Mammary epithelial cell (primary cell): ENCODE measurements at regions of chr3 and their contacts with region 1.

Region 1: DNA sequence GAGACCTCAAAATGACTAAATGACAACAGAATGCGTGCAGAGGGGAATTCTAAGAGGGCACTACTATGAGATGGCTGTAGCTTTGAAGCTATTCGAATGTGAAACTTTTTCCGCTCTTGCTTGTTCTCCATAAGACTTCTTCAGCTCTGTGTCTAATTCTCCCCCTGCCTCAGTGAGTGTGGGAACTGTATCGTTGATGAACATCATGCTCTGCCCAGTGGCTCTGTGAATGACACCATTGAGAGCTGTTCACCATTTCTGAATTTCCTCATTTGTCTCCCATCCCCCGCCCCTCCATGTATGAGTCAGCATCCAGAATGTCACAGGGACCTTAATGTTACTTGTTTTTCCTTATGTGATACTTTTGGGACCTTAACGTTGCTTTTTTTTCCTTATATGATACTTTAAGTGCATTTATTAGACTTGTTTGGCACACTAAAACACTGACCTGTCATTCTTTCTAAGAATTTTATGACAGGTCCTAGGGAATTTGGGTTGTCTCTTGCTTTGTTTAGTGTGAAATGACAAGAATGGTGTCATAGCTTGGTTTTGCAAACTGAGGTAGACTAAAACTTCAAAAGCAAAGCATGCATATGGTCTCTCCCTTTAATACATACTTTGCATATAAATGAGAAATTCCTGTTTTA is 99.5 kb downstream of the FNDC3B start:
- DNase-seq: peak; percentile 58
- H3K4me3 ChIP-seq: no peak overlapping the region
- H3K27ac ChIP-seq: peak overlapping the region; percentile 97
- H3K4me1 ChIP-seq: peaks cover 81% of the 10 kb centered on the region
- H3K27me3 ChIP-seq: no peaks in the 10 kb centered on the region
- CTCF ChIP-seq: no peak

Region 2: GRCh38 chr3:172155897-172156657 is 17.2 kb after region 1 on chr3:
- CTCF ChIA-PET with region 1: no interaction called
- dilution Hi-C with region 1: no loop called
- in situ Hi-C with region 1: no loop called
- intact Hi-C with region 1: loop called (anchors 2 kb)
- DNase-seq: peak; percentile 95
- H3K4me3 ChIP-seq: no peak overlapping the region
- H3K27ac ChIP-seq: peak overlapping the region; percentile 87
- H3K4me1 ChIP-seq: peaks cover 72% of the 10 kb centered on the region
- H3K27me3 ChIP-seq: no peaks in the 10 kb centered on the region
- CTCF ChIP-seq: no peak

Region 3: DNA sequence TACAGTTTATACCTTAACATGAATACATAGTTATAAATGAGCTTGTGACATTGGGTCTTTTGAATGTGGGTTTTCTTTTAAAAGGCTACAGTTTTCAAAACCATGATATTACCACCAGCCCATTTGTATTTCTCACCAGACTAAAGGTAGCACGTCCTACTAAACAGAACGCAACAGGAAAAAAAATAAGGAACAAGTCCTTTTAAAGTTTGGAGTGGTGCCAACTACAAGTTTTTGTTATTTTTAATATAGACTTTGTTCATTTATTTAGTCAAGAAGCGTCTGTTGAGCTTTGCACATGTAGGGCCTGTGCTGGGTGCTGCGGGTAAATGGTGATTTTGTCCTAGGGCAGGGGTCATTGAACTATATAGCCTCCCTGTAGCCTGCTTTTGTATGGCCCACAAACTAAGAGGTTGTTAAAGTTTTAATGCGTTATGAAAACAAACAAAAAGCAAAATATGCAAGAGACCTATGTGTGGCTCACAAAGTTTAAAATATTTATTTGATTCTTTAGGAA is 145.0 kb after region 1 on chr3:
- CTCF ChIA-PET with region 1: no interaction called
- dilution Hi-C with region 1: no loop called
- in situ Hi-C with region 1: no loop called
- intact Hi-C with region 1: loop called (anchors 1 kb)
- DNase-seq: no peak
- H3K4me3 ChIP-seq: no peak overlapping the region
- H3K27ac ChIP-seq: no peak overlapping the region
- H3K4me1 ChIP-seq: peaks cover 35% of the 10 kb centered on the region
- H3K27me3 ChIP-seq: no peaks in the 10 kb centered on the region
- CTCF ChIP-seq: no peak